ENCODE measurements at regions of chr3 and their contacts with region 1.

Region 1: DNA sequence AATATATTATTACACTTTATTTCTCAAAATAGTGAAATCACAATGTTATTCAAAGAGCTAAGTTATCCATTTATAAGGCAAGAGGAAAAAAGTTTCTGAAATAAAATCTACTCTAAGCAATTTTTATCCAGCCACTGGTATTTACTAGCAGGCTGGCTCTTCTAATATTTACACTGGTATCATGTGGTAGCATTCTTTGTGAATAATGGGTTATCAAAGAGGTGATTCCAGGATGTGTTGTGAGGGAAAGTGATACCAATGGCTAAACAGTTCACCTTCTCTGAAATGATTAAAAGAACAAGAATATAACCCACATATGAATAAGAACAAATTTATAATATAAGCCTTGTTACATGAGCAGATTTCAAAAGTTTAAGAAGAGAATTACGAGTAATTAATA is 44.1 kb downstream of the DHX36 start:
- DNase-seq: no peak
- ATAC-seq: no peak
- H3K4me3 ChIP-seq: no peak overlapping the region
- H3K4me3 Mint-ChIP-seq: no peak overlapping the region
- H3K27ac ChIP-seq: no peak overlapping the region
- H3K27ac Mint-ChIP-seq: no peak overlapping the region
- H3K4me1 ChIP-seq: no peaks in the 10 kb centered on the region
- H3K4me1 Mint-ChIP-seq: peaks cover under 1% of the 10 kb centered on the region
- H3K27me3 ChIP-seq: no peaks in the 10 kb centered on the region
- H3K27me3 Mint-ChIP-seq: no peaks in the 10 kb centered on the region
- CTCF ChIP-seq: no peak

Region 2: DNA sequence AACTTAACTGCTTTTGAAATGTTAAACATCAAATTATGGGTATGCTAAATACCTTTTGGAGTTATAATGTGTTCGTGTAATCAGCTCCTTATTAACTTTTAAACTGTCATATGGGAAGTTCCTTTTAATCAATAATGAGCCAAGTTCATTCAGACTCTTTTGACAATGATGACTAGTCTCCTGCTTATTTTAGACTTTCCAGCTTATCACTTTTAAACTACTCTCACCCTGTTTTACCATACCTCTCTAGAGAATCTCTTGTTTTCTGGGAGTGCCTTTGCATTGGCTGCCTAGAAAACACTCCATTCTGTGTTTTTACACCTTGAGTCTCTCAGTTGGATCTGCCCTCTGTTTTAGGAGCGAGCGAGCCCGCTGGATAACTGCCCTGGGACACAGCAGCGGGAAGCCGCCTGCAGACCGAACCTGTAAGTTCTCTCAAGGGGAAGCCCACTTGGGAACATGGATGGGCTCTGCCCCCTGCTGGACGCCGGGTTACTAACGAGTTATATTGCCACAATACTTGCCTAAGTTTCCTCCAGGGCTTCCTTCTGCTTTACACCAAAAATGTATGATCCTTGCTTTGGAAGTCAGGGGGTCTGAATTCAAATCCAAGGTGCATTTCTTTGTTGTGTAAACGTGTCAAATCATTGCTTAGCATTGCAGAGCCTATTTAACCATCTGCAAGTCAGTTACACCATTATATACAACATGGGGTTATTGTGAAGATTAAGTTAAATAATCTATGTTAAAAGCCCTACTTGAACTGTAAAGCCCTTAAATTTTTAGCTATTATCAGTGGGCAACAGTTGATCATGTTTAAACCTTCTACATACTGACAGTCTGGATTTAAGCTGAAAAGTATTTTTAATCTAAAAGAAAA is 27.2 kb before region 1 on chr3:
- CTCF ChIA-PET with region 1: no interaction called
- POLR2A ChIA-PET with region 1: no interaction called
- intact Hi-C with region 1: no loop called
- DNase-seq: peak; percentile 63
- ATAC-seq: peak; percentile 45
- H3K4me3 ChIP-seq: no peak overlapping the region
- H3K4me3 Mint-ChIP-seq: no peak overlapping the region
- H3K27ac ChIP-seq: no peak overlapping the region
- H3K27ac Mint-ChIP-seq: no peak overlapping the region
- H3K4me1 ChIP-seq: no peaks in the 10 kb centered on the region
- H3K4me1 Mint-ChIP-seq: peaks cover 3% of the 10 kb centered on the region
- H3K27me3 ChIP-seq: no peaks in the 10 kb centered on the region
- H3K27me3 Mint-ChIP-seq: no peaks in the 10 kb centered on the region
- CTCF ChIP-seq: peak; percentile 80

Region 3: GRCh38 chr3:154304116-154304786 is 24.1 kb after region 1 on chr3:
- CTCF ChIA-PET with region 1: no interaction called
- POLR2A ChIA-PET with region 1: no interaction called
- intact Hi-C with region 1: loop called (anchors 2 kb)
- DNase-seq: no peak
- ATAC-seq: no peak
- H3K4me3 ChIP-seq: no peak overlapping the region
- H3K4me3 Mint-ChIP-seq: no peak overlapping the region
- H3K27ac ChIP-seq: peak overlapping the region in 1 of 2 donors; percentile 41
- H3K27ac Mint-ChIP-seq: no peak overlapping the region
- H3K4me1 ChIP-seq: no peaks in the 10 kb centered on the region
- H3K4me1 Mint-ChIP-seq: peaks cover 15% of the 10 kb centered on the region
- H3K27me3 ChIP-seq: no peaks in the 10 kb centered on the region
- H3K27me3 Mint-ChIP-seq: no peaks in the 10 kb centered on the region
- CTCF ChIP-seq: no peak

Measured in B cell (primary cell).